ENCODE measurements at regions of chr9 and their contacts with region 1.

Region 1: GRCh38 chr9:35675732-35676392 is 2.1 kb downstream of the CA9 start:
- DNase-seq: peak; percentile 59
- H3K4me3 Mint-ChIP-seq: peak overlapping the region; percentile 48
- H3K27ac Mint-ChIP-seq: no peak overlapping the region
- H3K4me1 Mint-ChIP-seq: peaks cover 4% of the 10 kb centered on the region
- H3K27me3 Mint-ChIP-seq: peaks cover 9% of the 10 kb centered on the region

Region 2: GRCh38 chr9:35664531-35665470 is 11.1 kb before region 1 on chr9 and contains the start of gene ARHGEF39:
- CTCF ChIA-PET with region 1: interaction called, 10 read pairs
- POLR2A ChIA-PET with region 1: interaction called, 4 read pairs
- intact Hi-C with region 1: no loop called
- DNase-seq: peak; percentile 89
- H3K4me3 Mint-ChIP-seq: peak within 1 kb of the TSS; percentile 84
- H3K27ac Mint-ChIP-seq: peak within 1 kb of the TSS; percentile 73
- H3K4me1 Mint-ChIP-seq: peaks cover 53% of the 10 kb centered on the region
- H3K27me3 Mint-ChIP-seq: no peaks in the 10 kb centered on the region
- total RNA-seq, gene ARHGEF39: 28.1 to 28.2 TPM

Measured in activated CD4-positive, alpha-beta memory T cell treated with anti-CD3 and anti-CD28 coated beads for 36 hours (primary cell).